GM10248 (cell line): ENCODE measurements at regions of chr16 and their contacts with region 1.

Region 1: DNA sequence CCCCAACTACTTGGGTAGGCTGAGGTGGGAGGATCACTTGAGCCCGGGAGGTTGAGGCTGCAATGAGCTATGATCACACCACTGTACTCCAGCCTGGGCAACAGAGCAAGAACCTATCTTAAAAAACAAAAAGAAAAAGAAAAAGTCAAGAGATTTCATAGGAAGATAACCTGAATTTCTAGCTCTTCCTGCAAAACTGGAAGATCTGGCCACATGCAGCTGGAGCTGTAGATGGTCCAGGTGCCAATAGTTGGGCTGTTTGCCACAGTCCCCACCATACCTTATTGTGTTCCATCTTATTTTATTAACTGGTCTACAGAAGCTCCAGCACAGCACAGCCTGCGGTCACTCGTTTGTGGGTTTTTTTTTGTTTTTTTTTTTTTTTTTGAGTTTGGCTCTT is 15.0 kb downstream of the ATP2A1 start:
- DNase-seq: no peak
- CTCF ChIP-seq: no peak

Region 2: DNA sequence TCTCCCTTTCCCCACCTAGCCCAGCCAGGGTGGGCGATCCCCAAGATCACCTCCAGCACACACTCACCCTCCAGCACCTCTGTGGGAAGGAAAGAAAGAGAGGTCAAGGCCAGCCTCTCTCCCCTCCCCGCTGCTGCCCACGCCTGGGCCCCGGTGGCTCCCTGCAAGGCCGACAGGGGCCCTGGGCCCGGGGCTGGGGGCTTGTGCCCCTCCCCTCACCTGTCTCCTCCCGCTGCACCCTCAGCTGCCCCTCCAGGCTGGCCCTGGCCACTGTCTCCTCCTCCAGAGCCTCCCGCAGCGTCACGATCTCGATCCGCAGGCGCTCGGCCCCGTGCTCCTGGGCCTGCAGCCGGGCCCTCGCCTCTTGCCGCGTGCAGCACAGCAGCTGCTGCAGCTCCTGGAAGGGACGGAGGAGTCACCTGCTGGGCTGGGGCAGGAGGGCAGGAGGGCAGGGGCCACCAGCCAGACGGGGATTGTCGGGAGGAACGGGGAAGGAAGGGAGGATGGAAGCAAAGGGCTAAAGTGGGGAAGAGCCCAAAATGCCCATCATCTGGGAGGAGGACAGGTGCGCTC is 12.6 kb after region 1 on chr16:
- CTCF ChIA-PET with region 1: interaction called, 3 read pairs
- POLR2A ChIA-PET with region 1: interaction called, 13 read pairs
- DNase-seq: no peak
- CTCF ChIP-seq: no peak

Region 3: DNA sequence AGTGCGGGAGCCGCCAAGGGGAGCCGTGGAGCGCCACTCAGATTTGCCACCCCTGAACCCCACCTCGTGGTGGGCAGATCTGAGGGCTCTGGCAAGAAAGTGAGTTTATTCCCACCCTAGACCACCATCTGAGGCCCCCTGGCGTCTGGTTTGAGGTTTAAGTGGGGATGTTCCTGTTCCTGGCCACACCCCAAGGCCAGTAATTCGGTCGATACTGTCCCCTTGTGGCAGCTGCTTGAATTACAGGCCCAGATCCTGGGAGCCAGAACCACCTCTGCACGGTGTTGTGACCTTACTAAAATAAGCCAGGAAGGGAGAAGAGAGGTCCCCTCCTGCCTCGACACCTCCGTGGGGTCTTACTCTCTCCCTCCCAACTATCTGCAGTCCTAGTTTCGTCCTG is 88.2 kb after region 1 on chr16:
- CTCF ChIA-PET with region 1: no interaction called
- POLR2A ChIA-PET with region 1: no interaction called
- DNase-seq: peak; percentile 51
- CTCF ChIP-seq: peak; percentile 13